ENCODE measurements at regions of chr12 and their contacts with region 1.

Region 1: DNA sequence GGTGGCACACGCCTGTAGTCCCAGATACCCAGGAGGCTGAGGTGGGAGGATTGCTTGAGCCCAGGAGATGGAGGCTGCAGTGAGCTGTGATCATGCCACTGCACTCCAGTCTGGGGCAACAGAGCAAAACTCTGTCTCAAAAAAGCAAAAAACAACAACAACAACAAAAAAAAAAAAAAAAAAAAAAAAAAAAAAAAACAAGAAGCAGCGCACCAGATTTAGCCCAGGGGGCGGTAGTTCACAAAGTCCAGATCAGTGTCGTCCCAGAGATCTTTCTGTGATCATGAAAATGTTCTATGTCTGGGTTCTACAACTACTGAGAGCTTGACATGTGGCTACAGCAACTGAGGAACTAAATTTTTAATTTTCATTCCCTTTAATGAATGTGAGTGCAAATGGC is 27.4 kb downstream of the OAS2 start:
- DNase-seq: no peak
- ATAC-seq: no peak
- H3K4me3 Mint-ChIP-seq: no peak overlapping the region
- H3K27ac Mint-ChIP-seq: no peak overlapping the region
- H3K4me1 Mint-ChIP-seq: no peaks in the 10 kb centered on the region
- H3K27me3 Mint-ChIP-seq: peaks cover 3% of the 10 kb centered on the region; the same call in 1 of the 2 replicates
- CTCF ChIP-seq: no peak

Region 2: DNA sequence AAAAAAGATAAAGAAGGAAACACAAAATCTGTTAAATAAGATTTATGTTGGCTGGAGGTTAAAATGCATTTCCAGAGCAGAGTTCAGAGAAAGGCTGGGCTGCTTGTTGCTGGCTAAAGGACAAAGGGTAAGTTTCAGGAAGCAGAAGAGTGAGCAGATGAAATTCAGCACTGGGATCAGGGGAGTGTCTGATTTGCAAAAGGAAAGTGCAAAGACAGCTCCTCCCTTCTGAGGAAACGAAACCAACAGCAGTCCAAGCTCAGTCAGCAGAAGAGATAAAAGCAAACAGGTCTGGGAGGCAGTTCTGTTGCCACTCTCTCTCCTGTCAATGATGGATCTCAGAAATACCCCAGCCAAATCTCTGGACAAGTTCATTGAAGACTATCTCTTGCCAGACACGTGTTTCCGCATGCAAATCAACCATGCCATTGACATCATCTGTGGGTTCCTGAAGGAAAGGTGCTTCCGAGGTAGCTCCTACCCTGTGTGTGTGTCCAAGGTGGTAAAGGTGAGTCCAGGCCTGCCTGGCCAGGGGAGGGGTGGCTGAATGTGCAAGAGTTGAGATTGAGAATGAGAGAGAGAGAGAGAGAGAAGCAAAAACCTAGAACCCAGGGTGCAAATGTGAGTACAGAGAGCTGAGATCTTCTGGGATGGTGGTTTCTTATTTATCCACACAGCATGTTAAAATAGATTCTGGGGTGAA is 98.9 kb before region 1 on chr12 and contains the start of gene OAS1:
- CTCF ChIA-PET with region 1: no interaction called
- POLR2A ChIA-PET with region 1: no interaction called
- DNase-seq: no peak
- ATAC-seq: no peak
- H3K4me3 Mint-ChIP-seq: no peak within 1 kb of the TSS
- H3K27ac Mint-ChIP-seq: no peak within 1 kb of the TSS
- H3K4me1 Mint-ChIP-seq: peaks cover 11% of the 10 kb centered on the region
- H3K27me3 Mint-ChIP-seq: peaks cover 4% of the 10 kb centered on the region
- CTCF ChIP-seq: no peak
- total RNA-seq, gene OAS1: 0.24 to 0.30 TPM (median 0.27 TPM) in 3 replicates

Region 3: DNA sequence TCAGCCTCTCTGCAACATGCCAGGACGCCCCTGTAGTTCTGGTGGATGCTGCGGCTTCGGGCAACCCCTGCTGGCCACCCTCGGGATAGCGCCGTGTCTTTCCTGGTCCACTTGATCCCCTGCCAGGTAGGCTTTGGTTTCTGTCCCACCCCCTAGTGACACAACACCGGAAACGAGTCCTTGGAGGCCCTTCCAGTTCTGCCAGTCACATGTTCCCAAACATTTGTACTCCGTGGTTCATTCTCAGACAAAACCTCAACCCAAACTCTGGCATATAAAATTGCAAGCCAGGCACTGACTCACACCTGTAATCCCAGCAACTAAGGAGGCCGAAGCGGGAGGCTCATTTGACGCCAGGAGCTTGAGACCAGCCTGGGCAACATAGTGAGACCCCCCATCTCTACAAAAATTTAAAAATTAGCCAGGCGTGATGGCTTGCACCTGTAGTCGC is 92.7 kb after region 1 on chr12:
- CTCF ChIA-PET with region 1: interaction called, 10 read pairs
- POLR2A ChIA-PET with region 1: no interaction called
- DNase-seq: peak; percentile 91
- ATAC-seq: peak; percentile 91
- H3K4me3 Mint-ChIP-seq: no peak overlapping the region
- H3K27ac Mint-ChIP-seq: peak overlapping the region; percentile 95
- H3K4me1 Mint-ChIP-seq: peaks cover 9% of the 10 kb centered on the region
- H3K27me3 Mint-ChIP-seq: no peaks in the 10 kb centered on the region
- CTCF ChIP-seq: peak; percentile 84; the same call in 1 of the 2 replicates